ENCODE measurements at regions of chr1 and their contacts with region 1.

Region 1: DNA sequence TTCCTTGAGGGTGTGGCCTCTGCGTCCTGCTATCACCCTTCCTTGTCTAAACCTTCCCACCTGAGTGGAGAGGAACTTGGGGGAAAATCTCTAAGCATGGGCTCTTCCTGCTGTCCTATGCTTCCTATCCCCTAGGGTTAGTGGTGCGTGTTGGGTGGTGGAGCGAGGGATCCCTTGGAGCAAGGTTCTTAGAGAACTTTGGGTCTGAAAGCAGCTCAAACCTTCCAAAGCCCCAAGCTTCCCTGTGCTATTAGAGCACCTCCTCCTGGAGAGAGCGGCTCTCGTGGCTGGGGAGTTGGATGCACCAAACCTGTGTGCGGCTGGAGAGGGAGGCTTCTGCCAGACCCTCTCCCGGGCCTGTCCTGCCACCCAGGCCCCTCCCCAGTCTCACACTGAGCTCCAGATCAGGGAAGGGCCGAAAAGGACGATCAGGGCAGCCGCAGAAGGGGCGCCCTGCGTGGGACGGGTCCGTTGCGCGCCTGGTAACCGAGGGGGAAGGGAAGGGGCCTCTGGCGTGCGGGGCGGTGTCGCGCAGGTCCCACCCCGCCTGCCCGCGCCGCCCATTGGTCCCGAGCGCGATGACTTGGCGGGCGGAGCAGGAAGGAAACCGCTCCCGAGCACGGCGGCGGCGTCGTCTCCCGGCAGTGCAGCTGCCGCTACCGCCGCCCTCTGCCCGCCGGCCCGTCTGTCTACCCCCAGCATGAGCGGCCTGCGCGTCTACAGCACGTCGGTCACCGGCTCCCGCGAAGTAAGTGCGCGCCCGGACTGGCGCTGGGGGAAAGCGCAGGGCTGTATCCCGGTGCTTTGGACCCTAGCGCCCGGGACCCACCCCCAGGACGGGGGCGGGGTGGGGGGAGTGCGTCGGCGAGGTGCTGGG is at the start of gene SH3BGRL3:
- DNase-seq: peak; percentile 90
- ATAC-seq: peak; percentile 64
- H3K4me3 Mint-ChIP-seq: peak within 1 kb of the TSS; percentile 89
- H3K27ac Mint-ChIP-seq: peak within 1 kb of the TSS; percentile 96
- H3K4me1 Mint-ChIP-seq: peaks cover 85% of the 10 kb centered on the region
- H3K27me3 Mint-ChIP-seq: no peaks in the 10 kb centered on the region
- total RNA-seq, gene SH3BGRL3: 795 to 814 TPM

Region 2: GRCh38 chr1:26094677-26095383 is 184.9 kb before region 1 on chr1:
- CTCF ChIA-PET with region 1: no interaction called
- POLR2A ChIA-PET with region 1: no interaction called
- DNase-seq: no peak
- ATAC-seq: no peak
- H3K4me3 Mint-ChIP-seq: no peak overlapping the region
- H3K27ac Mint-ChIP-seq: no peak overlapping the region
- H3K4me1 Mint-ChIP-seq: peaks cover 5% of the 10 kb centered on the region
- H3K27me3 Mint-ChIP-seq: peaks cover 29% of the 10 kb centered on the region

Region 3: DNA sequence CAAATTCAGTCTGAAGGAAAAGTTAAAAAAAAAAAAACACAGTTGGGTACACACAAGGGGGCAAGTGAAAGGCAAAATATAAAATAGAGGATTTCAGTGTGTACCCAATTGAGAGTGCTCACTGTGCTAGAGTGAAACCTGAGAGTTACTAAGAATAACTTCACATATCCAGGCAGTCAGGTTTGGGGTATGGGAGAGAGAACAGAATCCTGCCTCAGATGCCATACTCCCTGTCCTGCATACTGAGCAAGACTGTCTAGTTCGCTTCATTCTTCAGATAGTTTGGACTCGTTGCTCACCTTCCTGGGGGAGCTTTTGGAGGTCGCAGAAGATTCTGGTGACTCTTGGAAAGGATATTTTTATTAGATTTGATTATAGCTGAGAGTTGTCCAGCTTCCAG is 25.3 kb before region 1 on chr1:
- CTCF ChIA-PET with region 1: interaction called, 14 read pairs
- POLR2A ChIA-PET with region 1: interaction called, 3 read pairs
- DNase-seq: no peak
- ATAC-seq: no peak
- H3K4me3 Mint-ChIP-seq: no peak overlapping the region
- H3K27ac Mint-ChIP-seq: no peak overlapping the region
- H3K4me1 Mint-ChIP-seq: peaks cover 5% of the 10 kb centered on the region
- H3K27me3 Mint-ChIP-seq: no peaks in the 10 kb centered on the region

Region 4: DNA sequence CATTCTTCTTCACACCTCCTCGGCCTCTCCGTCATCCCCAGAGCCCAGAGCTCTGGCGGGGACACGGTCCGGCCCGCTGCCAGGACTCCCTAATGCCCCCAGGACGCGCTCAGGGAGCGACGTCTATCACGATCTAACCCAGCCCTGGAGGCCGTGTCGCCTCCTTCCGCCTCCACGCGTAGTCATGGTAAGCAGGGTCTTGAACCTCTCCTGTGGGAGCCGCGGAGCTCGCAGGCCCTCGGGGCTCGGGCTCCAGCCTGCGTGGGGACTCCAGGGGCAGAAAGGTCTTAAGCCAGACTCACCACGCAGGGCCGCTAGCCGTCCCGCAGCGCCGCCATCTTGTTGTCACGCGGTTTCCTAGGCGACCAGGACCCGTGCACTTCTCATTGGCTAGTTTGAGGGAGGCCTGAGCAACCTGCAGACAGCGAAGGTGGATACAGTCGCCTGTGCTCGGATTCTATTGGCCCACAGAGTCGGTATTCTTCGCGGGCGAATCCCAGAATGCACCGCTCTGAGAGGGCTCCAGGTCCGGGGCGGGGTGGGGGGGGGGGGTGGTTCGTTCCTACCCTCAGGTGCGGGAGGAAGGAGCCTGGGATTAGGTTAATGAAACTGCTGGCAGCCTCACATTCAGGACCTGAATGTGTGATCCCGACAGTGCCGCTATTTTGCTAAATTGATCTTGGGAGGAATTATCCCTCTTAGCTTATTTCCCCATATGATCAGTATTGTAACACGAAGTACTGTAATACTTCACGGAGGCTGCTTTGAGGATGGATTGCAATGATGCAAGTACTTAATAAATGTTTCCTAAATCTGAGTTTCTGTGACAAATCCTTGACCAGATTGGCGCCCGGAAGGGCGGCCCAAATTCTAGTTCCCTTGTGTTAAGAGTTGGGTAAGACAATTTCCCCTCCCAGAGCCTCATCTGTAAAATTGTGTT is 26.9 kb after region 1 on chr1 and contains the start of gene UBXN11:
- CTCF ChIA-PET with region 1: interaction called, 159 read pairs
- POLR2A ChIA-PET with region 1: interaction called, 15 read pairs
- DNase-seq: peak; percentile 97
- ATAC-seq: peak; percentile 99
- H3K4me3 Mint-ChIP-seq: peak within 1 kb of the TSS; percentile 99
- H3K27ac Mint-ChIP-seq: peak within 1 kb of the TSS; percentile 96
- H3K4me1 Mint-ChIP-seq: peaks cover 38% of the 10 kb centered on the region
- H3K27me3 Mint-ChIP-seq: no peaks in the 10 kb centered on the region
- total RNA-seq, gene UBXN11: 34.4 to 40.9 TPM

Region 5: DNA sequence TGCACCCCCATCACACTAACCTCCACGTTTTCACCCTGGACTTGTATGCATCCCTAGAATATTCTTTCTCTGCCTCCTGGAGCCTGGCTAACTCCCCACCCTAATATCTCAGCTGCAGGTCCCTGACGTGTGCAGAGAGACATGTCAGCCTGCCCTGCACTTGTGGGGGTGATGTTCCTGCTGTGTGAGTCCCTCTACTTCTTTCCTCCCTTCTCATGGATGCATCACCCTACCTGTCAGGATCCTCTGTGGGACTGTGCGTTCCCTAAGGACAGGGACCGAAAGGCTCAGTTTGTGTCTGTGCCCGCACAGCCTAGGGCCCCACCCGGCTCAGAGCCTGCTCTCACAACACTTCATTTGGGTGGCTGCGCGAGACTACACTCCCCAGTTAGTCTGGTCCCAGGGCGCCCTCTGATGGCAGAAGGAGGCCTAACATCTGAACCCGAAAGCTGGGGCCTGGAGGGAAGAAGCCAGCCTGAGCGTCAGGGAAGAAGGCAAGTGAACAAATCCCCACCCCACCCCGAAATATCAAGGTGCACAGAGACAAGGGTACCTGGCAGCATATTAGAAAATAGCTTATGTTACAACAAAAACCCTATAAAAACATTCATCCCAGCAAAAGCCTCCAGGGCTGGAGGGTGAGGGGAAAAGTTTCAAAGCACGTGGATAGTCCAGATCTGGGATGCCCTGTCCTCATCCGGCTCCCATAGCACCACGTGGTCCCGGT is 41.8 kb after region 1 on chr1:
- CTCF ChIA-PET with region 1: interaction called, 591 read pairs
- POLR2A ChIA-PET with region 1: interaction called, 409 read pairs
- DNase-seq: peak; percentile 97
- ATAC-seq: peak; percentile 76
- H3K4me3 Mint-ChIP-seq: peak overlapping the region; percentile 84
- H3K27ac Mint-ChIP-seq: peak overlapping the region; percentile 94
- H3K4me1 Mint-ChIP-seq: peaks cover 49% of the 10 kb centered on the region
- H3K27me3 Mint-ChIP-seq: no peaks in the 10 kb centered on the region

Region 6: GRCh38 chr1:26363549-26364448 is 84.1 kb after region 1 on chr1:
- CTCF ChIA-PET with region 1: interaction called, 58 read pairs
- POLR2A ChIA-PET with region 1: interaction called, 4 read pairs
- DNase-seq: peak; percentile 93
- ATAC-seq: peak; percentile 76
- H3K4me3 Mint-ChIP-seq: peak overlapping the region; percentile 58
- H3K27ac Mint-ChIP-seq: peak overlapping the region; percentile 70
- H3K4me1 Mint-ChIP-seq: peaks cover 78% of the 10 kb centered on the region
- H3K27me3 Mint-ChIP-seq: peaks cover 11% of the 10 kb centered on the region

Measured in activated CD8-positive, alpha-beta T cell treated with anti-CD3 and anti-CD28 coated beads, Interleukin-2, amount 10 ng/mL, durations not matched to agents 7 days and 5 days (primary cell).